Psoas muscle (tissue), 8 donors: ENCODE measurements at regions of chr16 and their contacts with region 1.

Region 1: DNA sequence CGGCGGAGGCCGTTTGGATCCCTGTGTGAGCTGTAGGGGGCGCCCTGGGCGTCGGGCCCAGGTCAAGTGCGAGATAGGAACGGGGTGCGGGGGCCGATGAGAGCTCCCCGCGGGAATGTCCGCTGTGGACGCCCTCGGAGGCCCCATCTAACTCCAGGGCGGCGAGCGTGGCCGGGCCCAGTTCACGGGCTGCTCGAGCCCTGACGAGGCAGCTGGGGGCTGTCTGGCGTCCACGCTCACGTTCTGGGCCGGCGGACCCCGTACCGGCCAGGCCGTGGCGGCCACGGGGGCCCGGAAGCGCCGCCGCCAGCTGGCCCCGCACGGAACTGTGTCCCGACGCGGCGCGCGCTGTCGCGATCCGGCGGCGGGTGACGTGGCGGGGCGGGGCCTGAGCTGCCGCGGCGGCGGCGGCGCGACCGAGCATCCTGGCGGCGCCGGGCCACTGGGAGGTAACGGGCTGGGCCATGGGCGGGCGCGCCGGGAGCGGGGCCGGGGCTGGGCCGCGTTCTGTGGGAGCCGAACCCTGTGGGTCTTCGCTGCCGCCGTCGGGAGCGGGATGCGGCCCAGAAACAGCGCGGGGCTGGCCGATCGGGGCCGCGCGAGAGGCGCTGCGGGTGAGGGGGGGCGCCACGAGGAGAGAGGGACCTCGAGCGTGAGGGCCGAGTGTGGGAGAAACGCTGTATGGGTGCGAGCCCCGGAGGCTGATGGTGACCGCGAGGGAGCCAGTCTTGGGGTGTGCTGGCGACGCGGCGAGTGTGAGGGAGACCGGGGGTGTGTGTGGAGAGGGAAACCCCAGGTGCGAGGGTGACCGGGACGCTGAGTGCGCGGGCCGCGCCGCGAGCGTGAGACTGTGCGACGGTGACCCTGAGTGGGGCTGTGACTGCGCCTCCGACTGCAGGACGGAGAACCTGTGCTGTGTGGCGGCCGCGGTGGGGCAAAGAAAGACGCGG is at the start of gene SLC7A6:
- DNase-seq: peak; percentile 83 to 91
- ATAC-seq: peak; percentile 70 to 76 (median 72)
- H3K4me3 ChIP-seq: peak within 1 kb of the TSS; percentile 97
- H3K27ac ChIP-seq: peak within 1 kb of the TSS; percentile 100
- H3K4me1 ChIP-seq: peaks cover 36% of the 10 kb centered on the region
- H3K27me3 ChIP-seq: no peaks in the 10 kb centered on the region
- CTCF ChIP-seq: peak; percentile 62
- total RNA-seq, gene SLC7A6: 25.6 to 217 (median 70.5) TPM

Region 2: DNA sequence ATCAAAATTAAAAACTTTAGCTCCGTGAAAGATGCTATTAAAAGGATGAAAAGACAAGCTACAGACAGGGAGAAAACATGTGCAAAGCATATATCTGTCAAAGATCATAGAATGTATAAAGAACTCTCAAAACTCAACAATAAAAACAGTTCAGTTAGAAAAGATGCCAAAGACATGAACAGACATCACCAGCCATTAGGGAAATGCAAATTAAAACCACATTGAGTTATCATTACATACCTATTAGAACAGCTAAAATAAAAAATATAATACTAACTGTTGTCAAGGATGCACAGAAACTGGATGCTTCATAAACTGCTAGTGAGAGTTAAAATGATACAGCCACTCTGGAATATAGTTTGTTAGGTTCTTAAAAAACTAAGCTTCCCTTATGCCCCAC is 120.4 kb before region 1 on chr16:
- intact Hi-C with region 1: no loop called
- DNase-seq: no peak
- ATAC-seq: no peak
- H3K4me3 ChIP-seq: no peak overlapping the region
- H3K27ac ChIP-seq: no peak overlapping the region
- H3K4me1 ChIP-seq: peaks cover 51% of the 10 kb centered on the region
- H3K27me3 ChIP-seq: no peaks in the 10 kb centered on the region
- CTCF ChIP-seq: no peak

Region 3: GRCh38 chr16:68200088-68200783 is 64.2 kb before region 1 on chr16:
- intact Hi-C with region 1: no loop called
- DNase-seq: no peak
- ATAC-seq: no peak
- H3K4me3 ChIP-seq: no peak overlapping the region
- H3K27ac ChIP-seq: peak overlapping the region; percentile 79
- H3K4me1 ChIP-seq: peaks cover 42% of the 10 kb centered on the region
- H3K27me3 ChIP-seq: no peaks in the 10 kb centered on the region
- CTCF ChIP-seq: no peak

Region 4: GRCh38 chr16:68298907-68299561 is 34.6 kb after region 1 on chr16:
- intact Hi-C with region 1: loop called in 1 of 2 experiments (anchors 5 kb)
- DNase-seq: peak; percentile 63 to 83
- ATAC-seq: peak; percentile 52 to 64 (median 54)
- H3K4me3 ChIP-seq: no peak overlapping the region
- H3K27ac ChIP-seq: peak overlapping the region; percentile 64
- H3K4me1 ChIP-seq: peaks cover 29% of the 10 kb centered on the region
- H3K27me3 ChIP-seq: no peaks in the 10 kb centered on the region
- CTCF ChIP-seq: no peak

Region 5: DNA sequence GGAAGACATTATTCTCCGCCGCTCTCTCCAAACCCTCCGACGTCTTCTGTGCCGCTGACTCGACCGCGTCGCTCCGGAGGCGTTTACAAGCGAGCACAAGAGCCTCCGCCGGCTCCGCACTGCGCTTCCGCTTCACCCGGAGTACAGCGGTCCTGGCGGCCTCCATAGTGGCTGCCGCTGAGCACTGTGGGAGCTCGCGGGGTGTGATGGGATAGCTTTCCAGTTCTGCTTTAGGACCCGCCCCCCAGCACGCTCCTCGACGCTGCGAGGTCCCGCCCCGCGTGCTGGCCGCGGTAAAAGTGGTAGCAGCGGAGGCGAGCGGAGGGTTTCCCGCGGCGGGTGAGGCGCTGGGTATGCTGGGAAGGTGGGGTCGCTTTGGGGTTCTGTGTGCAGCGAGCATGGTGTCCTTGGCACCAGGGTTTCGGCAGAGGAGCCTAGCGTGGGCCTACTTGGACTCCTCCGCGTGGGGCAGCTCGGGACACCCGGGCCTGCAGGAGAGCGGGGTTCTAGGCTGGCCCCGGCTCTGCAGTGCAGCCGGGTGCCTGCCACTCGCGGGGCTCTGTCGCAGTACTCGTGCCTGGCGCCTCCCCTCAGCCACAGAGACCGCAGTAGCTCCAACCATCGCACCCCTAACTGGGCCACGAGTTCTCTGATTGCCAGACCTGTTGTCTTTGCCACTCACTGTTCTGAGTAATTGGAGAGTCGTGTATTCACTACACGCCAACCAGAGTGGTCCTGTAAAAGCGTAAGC is 46.5 kb after region 1 on chr16 and contains the starts of genes PRMT7 and SLC7A6OS:
- intact Hi-C with region 1: loop called in 1 of 2 experiments (anchors 5 kb)
- DNase-seq: peak; percentile 91 to 94
- ATAC-seq: peak; percentile 98 to 99 (median 99)
- H3K4me3 ChIP-seq: peak within 1 kb of the TSS; percentile 96
- H3K27ac ChIP-seq: peak within 1 kb of the TSS; percentile 94
- H3K4me1 ChIP-seq: peaks cover 31% of the 10 kb centered on the region
- H3K27me3 ChIP-seq: no peaks in the 10 kb centered on the region
- CTCF ChIP-seq: peak; percentile 21
- total RNA-seq, gene PRMT7: 19.9 to 31.4 (median 26.6) TPM
- total RNA-seq, gene SLC7A6OS: 7.9 to 12.6 (median 9.9) TPM

Region 6: GRCh38 chr16:68328151-68328859 is 63.9 kb after region 1 on chr16:
- intact Hi-C with region 1: loop called (anchors 1 to 5 kb)
- DNase-seq: peak; percentile 71 to 87
- ATAC-seq: peak; percentile 95 to 97 (median 96)
- H3K4me3 ChIP-seq: no peak overlapping the region
- H3K27ac ChIP-seq: no peak overlapping the region
- H3K4me1 ChIP-seq: peaks cover 12% of the 10 kb centered on the region
- H3K27me3 ChIP-seq: no peaks in the 10 kb centered on the region
- CTCF ChIP-seq: peak; percentile 96